Natural killer cell (primary cell): ENCODE measurements at regions of chr3 and their contacts with region 1.

Region 1: DNA sequence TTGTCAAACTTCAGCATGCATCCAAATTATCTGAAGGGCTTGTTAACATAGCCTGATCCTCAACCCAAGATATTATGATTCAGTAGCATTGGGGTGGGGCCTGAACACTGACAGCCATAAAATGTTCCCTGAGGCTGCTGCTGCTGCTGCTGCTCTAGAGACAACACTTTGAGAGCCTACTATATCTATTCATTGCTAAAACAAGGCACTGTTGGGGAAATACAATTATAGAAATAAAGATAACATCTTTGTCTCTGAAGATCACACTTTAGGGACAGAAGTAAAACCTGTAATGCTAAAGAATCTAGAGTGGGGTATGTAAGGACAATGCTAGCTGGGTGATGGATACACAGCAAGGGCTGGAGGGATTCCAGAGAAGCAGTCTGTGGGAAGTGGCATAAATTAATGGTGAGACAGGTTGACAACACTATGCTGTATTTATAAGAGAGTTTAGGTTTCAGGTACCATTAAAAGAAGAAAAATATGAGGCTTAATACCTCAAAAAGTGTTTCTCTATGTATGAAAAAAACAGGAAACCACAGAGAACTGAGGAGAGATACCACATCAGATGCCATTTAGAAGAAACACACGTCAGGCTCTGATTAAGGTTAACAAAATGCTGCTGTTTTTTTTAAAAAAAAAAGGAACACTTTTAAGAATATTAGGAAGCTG is 115.9 kb downstream of the CBLB start:
- DNase-seq: peak; percentile 30 to 83
- ATAC-seq: peak; percentile 71 to 82 (median 81)
- H3K4me3 ChIP-seq: peak overlapping the region; percentile 16
- H3K4me3 Mint-ChIP-seq: peak overlapping the region; percentile 93
- H3K27ac ChIP-seq: peak overlapping the region; percentile 96
- H3K27ac Mint-ChIP-seq: peak overlapping the region; percentile 85 to 93
- H3K4me1 ChIP-seq: peaks cover 37% of the 10 kb centered on the region
- H3K4me1 Mint-ChIP-seq: peaks cover 52 to 72% of the 10 kb centered on the region in 2 donors
- H3K27me3 ChIP-seq: no peaks in the 10 kb centered on the region
- H3K27me3 Mint-ChIP-seq: no peaks in the 10 kb centered on the region
- CTCF ChIP-seq: no peak

Region 2: DNA sequence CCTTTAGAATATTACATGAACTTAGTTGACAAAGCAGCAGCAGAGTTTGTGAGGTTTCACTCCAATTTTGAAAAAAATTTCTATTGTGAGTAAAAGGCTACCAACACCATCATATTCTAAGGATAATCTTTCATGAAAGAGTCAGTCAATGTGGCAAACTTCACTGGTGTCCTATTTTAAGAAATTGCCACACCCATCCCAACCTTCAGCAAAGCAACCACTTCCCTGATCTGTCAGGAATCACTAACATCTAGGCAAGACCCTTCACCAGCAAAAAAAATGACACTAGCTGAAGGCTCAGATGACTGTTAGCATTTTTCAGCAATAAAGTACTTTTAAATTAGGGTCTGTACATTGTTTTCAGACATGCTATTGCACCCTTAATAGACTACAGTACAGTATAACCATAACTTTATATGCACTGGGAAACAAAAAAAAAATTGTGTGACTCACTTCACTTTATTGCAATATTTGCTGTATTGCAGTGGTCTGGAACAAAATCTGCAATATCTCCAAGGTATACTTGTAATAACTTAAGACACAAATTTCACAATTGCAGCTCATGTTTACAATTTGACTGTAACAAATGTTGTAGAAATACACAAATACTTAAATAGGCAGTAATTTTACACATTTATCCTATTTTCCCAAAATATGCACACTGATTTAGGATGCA is 425.1 kb before region 1 on chr3:
- intact Hi-C with region 1: no loop called
- DNase-seq: no peak
- ATAC-seq: no peak
- H3K4me3 ChIP-seq: no peak overlapping the region
- H3K4me3 Mint-ChIP-seq: no peak overlapping the region
- H3K27ac ChIP-seq: no peak overlapping the region
- H3K27ac Mint-ChIP-seq: no peak overlapping the region
- H3K4me1 ChIP-seq: no peaks in the 10 kb centered on the region
- H3K4me1 Mint-ChIP-seq: no peaks in the 10 kb centered on the region
- H3K27me3 ChIP-seq: no peaks in the 10 kb centered on the region
- H3K27me3 Mint-ChIP-seq: no peaks in the 10 kb centered on the region
- CTCF ChIP-seq: no peak

Region 3: GRCh38 chr3:105676621-105677300 is 76.1 kb before region 1 on chr3:
- intact Hi-C with region 1: no loop called
- DNase-seq: no peak
- ATAC-seq: no peak
- H3K4me3 ChIP-seq: no peak overlapping the region
- H3K4me3 Mint-ChIP-seq: no peak overlapping the region
- H3K27ac ChIP-seq: no peak overlapping the region
- H3K27ac Mint-ChIP-seq: peak overlapping the region; percentile 8 to 66
- H3K4me1 ChIP-seq: no peaks in the 10 kb centered on the region
- H3K4me1 Mint-ChIP-seq: peaks cover 5 to 14% of the 10 kb centered on the region in 2 donors
- H3K27me3 ChIP-seq: no peaks in the 10 kb centered on the region
- H3K27me3 Mint-ChIP-seq: no peaks in the 10 kb centered on the region
- CTCF ChIP-seq: no peak

Region 4: GRCh38 chr3:105722943-105723556 is 29.8 kb before region 1 on chr3:
- intact Hi-C with region 1: loop called (anchors 2 kb)
- DNase-seq: peak in 1 of 2 donors; percentile 34
- ATAC-seq: peak; percentile 80 to 91 (median 84)
- H3K4me3 ChIP-seq: no peak overlapping the region
- H3K4me3 Mint-ChIP-seq: peak overlapping the region; percentile 77
- H3K27ac ChIP-seq: peak overlapping the region; percentile 45
- H3K27ac Mint-ChIP-seq: peak overlapping the region; percentile 87 to 92
- H3K4me1 ChIP-seq: no peaks in the 10 kb centered on the region
- H3K4me1 Mint-ChIP-seq: peaks cover 24 to 29% of the 10 kb centered on the region in 2 donors
- H3K27me3 ChIP-seq: no peaks in the 10 kb centered on the region
- H3K27me3 Mint-ChIP-seq: no peaks in the 10 kb centered on the region
- CTCF ChIP-seq: no peak

Region 5: DNA sequence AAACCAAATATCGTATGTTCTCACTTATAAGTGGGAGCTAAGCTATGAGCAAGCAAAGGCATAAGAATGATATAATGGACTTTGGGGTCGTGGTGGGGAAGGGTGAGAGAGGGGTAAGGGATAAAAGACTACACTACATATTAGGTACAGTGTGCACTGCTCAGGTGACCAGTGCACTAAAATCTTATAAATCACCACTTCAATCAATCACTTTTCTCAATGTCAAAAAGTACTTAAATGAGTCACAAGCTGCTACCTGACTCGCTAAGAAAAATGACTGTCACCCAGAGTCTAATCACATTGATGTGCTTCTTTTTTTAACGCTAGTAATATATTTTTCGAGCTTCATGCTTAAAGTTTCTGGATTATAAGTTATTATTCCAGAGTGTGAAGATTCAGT is 20.4 kb after region 1 on chr3:
- intact Hi-C with region 1: loop called (anchors 2 kb)
- DNase-seq: no peak
- ATAC-seq: no peak
- H3K4me3 ChIP-seq: no peak overlapping the region
- H3K4me3 Mint-ChIP-seq: no peak overlapping the region
- H3K27ac ChIP-seq: no peak overlapping the region
- H3K27ac Mint-ChIP-seq: peak overlapping the region; percentile 68 to 78
- H3K4me1 ChIP-seq: peaks cover 16% of the 10 kb centered on the region
- H3K4me1 Mint-ChIP-seq: peaks cover 84 to 93% of the 10 kb centered on the region in 2 donors
- H3K27me3 ChIP-seq: no peaks in the 10 kb centered on the region
- H3K27me3 Mint-ChIP-seq: no peaks in the 10 kb centered on the region
- CTCF ChIP-seq: no peak

Region 6: GRCh38 chr3:105806361-105806760 is 53.5 kb after region 1 on chr3:
- intact Hi-C with region 1: loop called (anchors 2 kb)
- DNase-seq: peak in 1 of 2 donors; percentile 70
- ATAC-seq: peak; percentile 82 to 86 (median 86)
- H3K4me3 ChIP-seq: no peak overlapping the region
- H3K4me3 Mint-ChIP-seq: peak overlapping the region; percentile 67
- H3K27ac ChIP-seq: peak overlapping the region; percentile 42
- H3K27ac Mint-ChIP-seq: peak overlapping the region; percentile 75 to 89
- H3K4me1 ChIP-seq: peaks cover 12% of the 10 kb centered on the region
- H3K4me1 Mint-ChIP-seq: peaks cover 59 to 65% of the 10 kb centered on the region in 2 donors
- H3K27me3 ChIP-seq: no peaks in the 10 kb centered on the region
- H3K27me3 Mint-ChIP-seq: no peaks in the 10 kb centered on the region
- CTCF ChIP-seq: no peak

Region 7: DNA sequence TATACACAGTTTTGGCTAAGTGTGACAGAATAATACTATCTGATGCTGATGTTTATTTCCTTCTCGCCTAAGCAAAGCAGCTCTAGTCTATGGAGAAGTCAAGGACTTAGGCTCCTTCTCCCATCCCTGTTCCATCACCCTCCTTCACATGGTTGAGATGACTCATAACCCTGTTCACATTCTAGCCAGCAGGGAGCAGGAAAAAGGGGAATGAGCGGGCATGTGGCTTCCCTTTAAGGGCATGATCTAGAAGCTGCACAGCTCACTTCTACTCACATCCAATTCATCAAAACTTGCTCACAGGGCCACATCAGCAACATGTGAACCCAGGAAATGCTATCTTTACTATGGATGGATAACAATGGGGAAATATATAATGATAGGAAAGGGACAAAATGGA is 75.1 kb after region 1 on chr3:
- intact Hi-C with region 1: loop called (anchors 2 kb)
- DNase-seq: peak in 1 of 2 donors; percentile 40
- ATAC-seq: no peak
- H3K4me3 ChIP-seq: no peak overlapping the region
- H3K4me3 Mint-ChIP-seq: peak overlapping the region; percentile 30
- H3K27ac ChIP-seq: peak overlapping the region; percentile 56
- H3K27ac Mint-ChIP-seq: peak overlapping the region; percentile 83
- H3K4me1 ChIP-seq: peaks cover 28% of the 10 kb centered on the region
- H3K4me1 Mint-ChIP-seq: peaks cover 87 to 88% of the 10 kb centered on the region in 2 donors
- H3K27me3 ChIP-seq: no peaks in the 10 kb centered on the region
- H3K27me3 Mint-ChIP-seq: no peaks in the 10 kb centered on the region
- CTCF ChIP-seq: no peak

Region 8: DNA sequence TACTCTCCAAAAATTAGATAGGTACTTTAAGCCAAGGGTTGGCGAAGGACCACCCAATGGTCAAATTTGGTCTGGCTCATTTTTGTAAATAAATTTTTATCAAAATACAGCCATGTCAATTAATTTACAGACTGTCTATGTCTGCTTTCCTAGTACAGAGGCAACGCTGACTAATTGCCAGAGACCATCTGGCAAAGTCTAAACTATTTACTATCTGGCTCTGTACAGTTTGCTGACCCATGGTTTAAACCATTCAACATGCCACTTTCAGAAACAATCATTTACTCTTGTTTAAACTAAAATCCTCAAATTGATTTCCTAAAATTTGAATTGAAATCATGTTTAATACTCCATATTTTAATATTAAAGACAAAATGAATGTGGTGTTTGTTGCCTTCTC is 90.1 kb after region 1 on chr3:
- intact Hi-C with region 1: loop called (anchors 5 kb)
- DNase-seq: no peak
- ATAC-seq: no peak
- H3K4me3 ChIP-seq: no peak overlapping the region
- H3K4me3 Mint-ChIP-seq: no peak overlapping the region
- H3K27ac ChIP-seq: no peak overlapping the region
- H3K27ac Mint-ChIP-seq: no peak overlapping the region
- H3K4me1 ChIP-seq: no peaks in the 10 kb centered on the region
- H3K4me1 Mint-ChIP-seq: peaks cover 67 to 69% of the 10 kb centered on the region in 2 donors
- H3K27me3 ChIP-seq: no peaks in the 10 kb centered on the region
- H3K27me3 Mint-ChIP-seq: no peaks in the 10 kb centered on the region
- CTCF ChIP-seq: no peak

Region 9: GRCh38 chr3:106172780-106173179 is 419.9 kb after region 1 on chr3:
- intact Hi-C with region 1: no loop called
- DNase-seq: peak in 1 of 2 donors; percentile 29
- ATAC-seq: peak; percentile 27 to 65 (median 46)
- H3K4me3 ChIP-seq: no peak overlapping the region
- H3K4me3 Mint-ChIP-seq: peak overlapping the region; percentile 73
- H3K27ac ChIP-seq: no peak overlapping the region
- H3K27ac Mint-ChIP-seq: peak overlapping the region; percentile 67 to 79
- H3K4me1 ChIP-seq: peaks cover 11% of the 10 kb centered on the region
- H3K4me1 Mint-ChIP-seq: peaks cover 43 to 54% of the 10 kb centered on the region in 2 donors
- H3K27me3 ChIP-seq: no peaks in the 10 kb centered on the region
- H3K27me3 Mint-ChIP-seq: no peaks in the 10 kb centered on the region
- CTCF ChIP-seq: no peak